ENCODE measurements at regions of chr2 and their contacts with region 1.

Region 1: GRCh38 chr2:190069936-190070696 is 7.6 kb upstream of the MSTN start:
- DNase-seq: peak; percentile 9
- H3K4me3 ChIP-seq: no peak overlapping the region
- CTCF ChIP-seq: peak; percentile 34

Region 2: DNA sequence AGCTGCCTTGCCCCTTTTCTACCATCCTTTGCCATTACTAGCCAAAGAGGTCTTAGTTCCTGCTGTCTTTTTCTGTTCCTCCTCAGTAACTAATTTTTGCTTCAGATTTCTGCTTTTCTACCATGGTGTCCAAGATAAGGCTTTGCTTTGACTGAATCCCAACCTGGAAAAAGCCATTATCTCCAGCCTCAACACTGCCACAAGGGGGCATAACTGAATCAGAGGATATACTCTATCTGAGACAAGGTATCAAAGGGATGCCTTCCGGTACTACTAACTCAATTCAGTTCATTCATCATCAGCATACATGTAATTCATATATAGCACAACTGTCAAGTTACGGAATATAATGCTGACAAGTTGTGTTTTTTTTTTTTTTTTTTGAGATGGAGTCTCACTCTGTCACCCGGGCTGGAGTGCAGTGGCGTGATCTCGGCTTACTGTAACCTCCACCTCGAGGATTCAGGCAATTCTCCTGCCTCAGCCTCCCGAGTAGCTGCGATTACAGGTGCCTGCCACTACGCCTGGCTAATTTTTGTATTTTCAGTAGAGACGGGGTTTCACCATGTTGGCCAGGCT is 318.9 kb before region 1 on chr2:
- CTCF ChIA-PET with region 1: interaction called, 79 read pairs
- POLR2A ChIA-PET with region 1: no interaction called
- DNase-seq: no peak
- H3K4me3 ChIP-seq: no peak overlapping the region
- CTCF ChIP-seq: peak; percentile 57

Region 3: DNA sequence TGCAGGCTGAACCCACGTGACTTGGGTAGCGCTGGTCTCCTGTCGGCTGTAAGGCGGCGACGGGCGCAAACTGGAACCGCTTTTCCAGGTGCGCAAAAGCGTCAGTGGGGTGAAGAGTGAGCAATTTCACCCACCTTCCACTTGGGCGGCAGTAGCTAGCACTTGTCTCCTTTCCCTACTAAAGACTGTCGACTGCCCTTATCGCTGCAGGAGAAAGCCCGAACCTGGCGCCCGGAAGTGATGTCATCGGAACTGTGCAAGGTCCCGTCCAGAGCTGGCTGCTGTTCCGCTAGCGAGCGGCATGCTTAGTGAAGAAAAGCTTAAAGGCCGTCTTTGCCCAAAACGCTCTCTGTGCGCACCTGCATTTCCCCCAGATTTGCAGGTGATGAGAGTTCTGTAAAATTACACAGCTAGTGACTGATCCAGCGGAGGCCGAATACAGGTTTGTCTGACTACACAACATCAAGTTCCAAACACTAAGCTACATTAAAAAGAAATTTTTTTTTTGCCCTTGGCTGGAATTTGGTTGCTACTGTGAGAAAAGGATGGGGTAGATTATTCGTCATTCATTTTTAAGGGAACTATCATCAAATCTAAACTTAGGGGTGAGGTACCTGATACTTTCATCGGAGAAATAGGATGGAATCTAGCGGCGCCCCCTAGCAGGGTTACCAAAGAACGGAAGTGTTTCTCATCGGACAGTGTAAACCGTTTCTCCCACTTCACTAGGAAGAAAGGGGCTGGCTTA is 307.4 kb before region 1 on chr2 and contains the start of gene OSGEPL1:
- CTCF ChIA-PET with region 1: interaction called, 13 read pairs
- POLR2A ChIA-PET with region 1: no interaction called
- DNase-seq: no peak
- H3K4me3 ChIP-seq: peak within 1 kb of the TSS; percentile 93
- CTCF ChIP-seq: peak; percentile 72

Region 4: DNA sequence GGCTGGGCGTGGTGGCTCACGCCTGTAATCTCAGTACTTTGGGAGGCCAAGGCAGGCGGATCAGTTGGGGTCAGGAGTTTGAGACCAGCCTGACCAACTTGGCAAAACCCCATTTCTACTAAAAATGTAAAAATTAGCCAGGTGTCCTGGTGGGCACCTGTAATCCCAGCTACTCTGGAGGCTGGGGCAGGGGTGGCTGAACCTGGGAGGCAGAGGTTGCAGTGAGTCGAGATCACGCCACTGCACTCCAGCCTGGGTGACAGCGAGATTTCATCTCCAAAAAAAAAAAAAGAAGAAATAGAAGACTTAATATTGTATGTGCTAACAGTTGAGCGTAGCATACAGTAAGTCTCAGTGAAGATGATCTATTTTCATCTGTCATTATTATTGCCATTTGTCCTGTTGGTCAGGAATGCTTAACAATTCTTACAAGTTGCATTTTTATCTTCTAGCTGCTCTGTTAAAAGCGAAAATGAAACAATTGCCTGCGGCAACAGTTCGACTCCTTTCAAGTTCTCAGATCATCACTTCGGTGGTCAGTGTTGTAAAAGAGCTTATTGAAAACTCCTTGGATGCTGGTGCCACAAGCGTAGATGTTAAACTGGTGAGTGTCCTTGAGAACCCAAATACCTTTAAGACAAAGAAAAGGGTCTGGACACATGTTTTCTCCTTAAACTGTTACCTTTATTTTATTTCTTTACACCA is 278.6 kb before region 1 on chr2:
- CTCF ChIA-PET with region 1: interaction called, 10 read pairs
- POLR2A ChIA-PET with region 1: no interaction called
- DNase-seq: no peak
- H3K4me3 ChIP-seq: no peak overlapping the region
- CTCF ChIP-seq: no peak

Region 5: DNA sequence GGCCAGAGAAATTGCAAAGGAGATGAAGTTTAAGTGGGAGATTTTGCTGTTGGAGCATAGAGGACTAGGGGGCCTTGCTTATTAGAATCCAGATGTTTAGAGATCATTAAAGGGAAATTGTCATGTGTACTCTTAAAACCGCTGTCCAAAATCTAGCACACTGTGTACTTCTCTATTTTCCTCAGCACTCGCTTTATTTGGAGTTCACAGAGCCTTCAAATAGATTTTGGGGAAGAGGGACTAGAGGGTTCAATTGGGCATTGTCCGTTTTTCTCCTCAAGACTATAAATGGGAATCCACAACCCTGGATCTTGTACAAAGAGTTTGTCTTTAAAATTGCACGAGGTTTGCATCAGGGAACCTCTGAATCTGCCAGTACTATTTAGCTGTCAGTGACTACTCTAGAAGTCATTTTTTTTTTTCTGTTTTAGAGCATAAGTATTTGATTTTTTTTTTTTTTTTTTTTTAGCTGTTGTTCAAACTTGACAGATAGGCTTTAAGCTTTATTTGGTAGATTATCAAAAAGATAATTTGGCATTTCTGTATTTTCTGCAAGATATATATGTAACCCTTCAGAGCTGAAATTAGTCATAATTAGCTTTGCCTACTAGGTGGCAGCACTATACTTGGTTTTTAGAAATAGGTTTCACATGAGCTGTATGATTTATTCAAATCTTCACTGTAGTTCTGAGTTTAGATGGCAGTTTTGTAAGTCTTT is 271.6 kb before region 1 on chr2:
- CTCF ChIA-PET with region 1: interaction called, 95 read pairs
- POLR2A ChIA-PET with region 1: no interaction called
- DNase-seq: peak; percentile 21
- H3K4me3 ChIP-seq: no peak overlapping the region
- CTCF ChIP-seq: peak; percentile 37

Region 6: DNA sequence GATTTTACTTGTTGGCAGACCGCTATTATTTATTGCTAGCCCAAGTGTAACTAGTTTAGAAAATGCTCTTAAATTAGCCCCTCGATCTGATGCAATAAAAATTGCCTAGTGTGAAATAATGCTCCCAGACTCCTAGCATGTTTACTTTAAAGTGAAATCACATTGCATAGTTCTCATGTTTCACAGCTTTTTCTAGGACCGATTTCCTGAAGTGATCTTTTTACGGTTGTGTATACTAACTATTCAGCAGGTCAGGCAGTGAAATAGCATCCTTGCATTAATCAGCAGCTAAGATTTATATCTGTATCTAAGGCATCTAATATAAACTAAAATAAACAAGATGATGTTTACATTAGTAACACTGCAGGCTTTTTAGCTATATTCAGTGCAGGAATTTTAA is 233.5 kb before region 1 on chr2:
- CTCF ChIA-PET with region 1: no interaction called
- POLR2A ChIA-PET with region 1: no interaction called
- DNase-seq: peak; percentile 77
- H3K4me3 ChIP-seq: no peak overlapping the region
- CTCF ChIP-seq: no peak

Region 7: GRCh38 chr2:189997016-189997415 is 73.1 kb before region 1 on chr2:
- CTCF ChIA-PET with region 1: no interaction called
- POLR2A ChIA-PET with region 1: no interaction called
- DNase-seq: no peak
- H3K4me3 ChIP-seq: no peak overlapping the region
- CTCF ChIP-seq: no peak

Region 8: DNA sequence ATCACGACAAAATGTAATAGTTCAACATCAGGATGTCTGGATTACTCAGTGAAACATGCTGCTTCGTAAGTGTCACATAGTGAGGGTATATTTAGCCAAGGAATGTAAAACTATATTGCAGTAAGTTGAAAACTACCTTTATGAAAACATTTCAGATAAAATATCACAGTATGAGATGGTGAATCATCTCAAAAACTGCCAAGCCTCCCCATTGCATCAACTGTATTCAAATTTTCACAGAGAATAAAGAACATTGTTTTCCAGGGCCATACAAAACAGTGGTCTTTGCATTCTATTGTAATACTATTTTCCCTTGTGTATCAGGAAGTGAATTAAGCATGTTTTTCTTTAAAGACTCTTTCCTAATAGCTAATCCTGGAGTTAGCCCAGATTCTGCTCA is 40.0 kb after region 1 on chr2:
- CTCF ChIA-PET with region 1: no interaction called
- POLR2A ChIA-PET with region 1: no interaction called
- DNase-seq: no peak
- H3K4me3 ChIP-seq: no peak overlapping the region
- CTCF ChIP-seq: no peak

Measured in AG04449 (cell line).